ENCODE measurements at regions of chr14 and their contacts with region 1.

Region 1: GRCh38 chr14:61196792-61197191 is 84.3 kb downstream of the TMEM30B start:
- DNase-seq: no peak
- H3K4me3 ChIP-seq: no peak overlapping the region
- H3K27ac ChIP-seq: no peak overlapping the region
- H3K4me1 ChIP-seq: no peaks in the 10 kb centered on the region
- H3K27me3 ChIP-seq: no peaks in the 10 kb centered on the region
- CTCF ChIP-seq: no peak
- EP300 ChIP-seq: no peak
- POLR2A ChIP-seq: no peak

Region 2: GRCh38 chr14:60980811-60981632 is 215.8 kb before region 1 on chr14 and contains the starts of genes SLC38A6 and TRMT5:
- intact Hi-C with region 1: loop called (anchors 10 kb)
- DNase-seq: peak; percentile 98
- H3K4me3 ChIP-seq: peak within 1 kb of the TSS; percentile 66 to 83 (median 80)
- H3K27ac ChIP-seq: peak within 1 kb of the TSS; percentile 86 to 90 (median 86)
- H3K4me1 ChIP-seq: peaks cover 14 to 50% (median 46%) of the 10 kb centered on the region in 4 donors
- H3K27me3 ChIP-seq: no peaks in the 10 kb centered on the region
- CTCF ChIP-seq: peak in 1 of 3 experiments; percentile 14
- EP300 ChIP-seq: no peak
- POLR2A ChIP-seq: peak; percentile 11
- total RNA-seq, gene SLC38A6: 11.1 to 19.1 (median 12.0) TPM
- total RNA-seq, gene TRMT5: 8.6 to 12.0 (median 9.4) TPM

Region 3: DNA sequence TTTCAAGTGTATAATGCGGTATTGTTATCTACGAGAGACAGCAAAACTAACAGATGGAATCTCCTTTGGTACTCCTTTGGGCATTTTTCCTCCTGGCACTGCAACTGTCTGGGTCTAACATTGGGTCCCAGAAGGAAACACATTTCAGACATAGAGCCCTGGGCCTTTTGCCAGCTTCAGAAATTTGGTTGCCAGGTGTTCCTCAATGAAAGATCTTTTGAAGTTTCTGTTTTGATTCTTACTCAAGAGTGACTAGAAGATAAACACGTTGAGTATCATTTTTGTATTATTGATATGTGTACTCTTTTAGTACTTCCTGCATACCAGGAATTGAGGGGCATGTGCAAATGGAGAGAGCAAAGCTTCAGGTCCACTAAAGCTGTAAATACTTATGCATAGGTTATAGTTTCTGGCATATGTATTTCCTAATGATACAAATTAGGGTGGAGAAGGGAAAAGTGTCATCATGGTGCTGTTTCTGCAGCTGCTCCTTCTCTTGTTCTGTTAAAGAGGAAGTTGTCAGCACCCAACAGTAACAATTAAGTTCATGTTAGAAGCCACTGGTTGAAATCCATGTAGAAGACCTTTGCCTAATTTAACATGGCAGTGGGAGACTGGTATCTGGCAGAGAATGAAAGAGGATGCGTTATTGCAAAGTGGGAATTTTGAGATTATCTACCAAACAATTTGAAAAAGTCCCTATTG is 162.2 kb before region 1 on chr14:
- intact Hi-C with region 1: loop called (anchors 10 kb)
- DNase-seq: no peak
- H3K4me3 ChIP-seq: no peak overlapping the region
- H3K27ac ChIP-seq: no peak overlapping the region
- H3K4me1 ChIP-seq: peaks cover 0 to 7% (median 0%) of the 10 kb centered on the region in 4 donors
- H3K27me3 ChIP-seq: no peaks in the 10 kb centered on the region
- CTCF ChIP-seq: no peak
- EP300 ChIP-seq: no peak
- POLR2A ChIP-seq: no peak